ENCODE measurements at regions of chr1 and their contacts with region 1.

Region 1: GRCh38 chr1:21294266-21294989 is 4.2 kb upstream of the ECE1 start:
- DNase-seq: peak; percentile 97
- H3K4me3 Mint-ChIP-seq: peak overlapping the region; percentile 67
- H3K27ac Mint-ChIP-seq: peak overlapping the region; percentile 99
- H3K4me1 Mint-ChIP-seq: peaks cover 89% of the 10 kb centered on the region
- H3K27me3 Mint-ChIP-seq: no peaks in the 10 kb centered on the region

Region 2: GRCh38 chr1:20185834-20186782 is 1108.3 kb before region 1 on chr1 and contains the starts of genes PLA2G2C and UBXN10:
- CTCF ChIA-PET with region 1: no interaction called
- intact Hi-C with region 1: loop called (anchors 10 kb)
- DNase-seq: peak; percentile 94
- H3K4me3 Mint-ChIP-seq: peak within 1 kb of the TSS; percentile 62
- H3K27ac Mint-ChIP-seq: peak within 1 kb of the TSS; percentile 82
- H3K4me1 Mint-ChIP-seq: peaks cover 41% of the 10 kb centered on the region
- H3K27me3 Mint-ChIP-seq: no peaks in the 10 kb centered on the region
- total RNA-seq, gene PLA2G2C: 0.94 to 0.95 TPM
- total RNA-seq, gene UBXN10: 0.27 to 0.33 TPM

Region 3: GRCh38 chr1:21176586-21177555 is 117.6 kb before region 1 on chr1 and contains the start of gene EIF4G3:
- CTCF ChIA-PET with region 1: no interaction called
- intact Hi-C with region 1: loop called (anchors 1 kb)
- DNase-seq: peak; percentile 100
- H3K4me3 Mint-ChIP-seq: peak within 1 kb of the TSS; percentile 83
- H3K27ac Mint-ChIP-seq: peak within 1 kb of the TSS; percentile 92
- H3K4me1 Mint-ChIP-seq: peaks cover 24% of the 10 kb centered on the region
- H3K27me3 Mint-ChIP-seq: no peaks in the 10 kb centered on the region
- total RNA-seq, gene EIF4G3: 44.6 to 48.0 TPM

Region 4: DNA sequence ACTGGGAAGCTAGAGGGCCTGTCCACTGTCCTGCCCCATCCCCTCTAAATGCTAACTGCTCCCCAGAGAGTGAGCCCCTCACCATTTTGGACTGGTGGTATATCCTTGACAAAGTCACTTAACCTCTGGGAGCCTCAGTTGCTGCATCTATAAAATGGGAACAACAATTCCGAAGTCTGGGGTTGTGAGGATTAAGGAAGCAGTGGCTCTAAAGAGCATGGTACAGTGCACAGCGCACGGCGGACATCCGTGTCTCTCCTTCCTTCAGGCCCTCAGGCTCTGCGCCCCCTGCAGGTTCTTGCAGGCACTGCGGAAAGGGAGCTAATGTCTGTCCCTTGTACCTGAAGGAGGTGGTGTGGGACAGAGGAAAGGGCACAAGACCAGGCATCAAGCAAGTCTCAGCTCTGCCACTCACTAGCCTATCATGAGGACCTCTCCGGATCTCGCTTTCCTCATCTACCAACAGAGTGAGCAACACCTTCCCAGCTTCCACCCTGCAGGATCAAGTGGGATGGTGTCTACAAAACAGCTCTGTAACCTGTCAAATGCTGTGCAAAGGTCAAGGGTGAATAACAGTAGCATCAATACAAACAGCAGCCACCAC is 24.2 kb before region 1 on chr1:
- CTCF ChIA-PET with region 1: interaction called, 16 read pairs
- intact Hi-C with region 1: no loop called
- DNase-seq: peak; percentile 92
- H3K4me3 Mint-ChIP-seq: no peak overlapping the region
- H3K27ac Mint-ChIP-seq: peak overlapping the region; percentile 52
- H3K4me1 Mint-ChIP-seq: peaks cover 21% of the 10 kb centered on the region
- H3K27me3 Mint-ChIP-seq: no peaks in the 10 kb centered on the region

Region 5: GRCh38 chr1:21334214-21335087 is 40.0 kb after region 1 on chr1:
- CTCF ChIA-PET with region 1: interaction called, 6 read pairs
- intact Hi-C with region 1: loop called (anchors 2 kb)
- DNase-seq: peak; percentile 86
- H3K4me3 Mint-ChIP-seq: peak overlapping the region; percentile 87
- H3K27ac Mint-ChIP-seq: peak overlapping the region; percentile 99
- H3K4me1 Mint-ChIP-seq: peaks cover 91% of the 10 kb centered on the region
- H3K27me3 Mint-ChIP-seq: no peaks in the 10 kb centered on the region

Region 6: GRCh38 chr1:22025368-22026155 is 731.1 kb after region 1 on chr1:
- CTCF ChIA-PET with region 1: interaction called, 3 read pairs
- intact Hi-C with region 1: loop called (anchors 1 kb)
- DNase-seq: peak; percentile 94
- H3K4me3 Mint-ChIP-seq: peak overlapping the region; percentile 88
- H3K27ac Mint-ChIP-seq: peak overlapping the region; percentile 97
- H3K4me1 Mint-ChIP-seq: peaks cover 54% of the 10 kb centered on the region
- H3K27me3 Mint-ChIP-seq: no peaks in the 10 kb centered on the region

Measured in activated naive CD4-positive, alpha-beta T cell treated with anti-CD3 and anti-CD28 coated beads for 36 hours (primary cell).